Activated CD4-positive, alpha-beta T cell treated with anti-CD3 and anti-CD28 coated beads for 36 hours (primary cell): ENCODE measurements at regions of chr9 and their contacts with region 1.

Region 1: DNA sequence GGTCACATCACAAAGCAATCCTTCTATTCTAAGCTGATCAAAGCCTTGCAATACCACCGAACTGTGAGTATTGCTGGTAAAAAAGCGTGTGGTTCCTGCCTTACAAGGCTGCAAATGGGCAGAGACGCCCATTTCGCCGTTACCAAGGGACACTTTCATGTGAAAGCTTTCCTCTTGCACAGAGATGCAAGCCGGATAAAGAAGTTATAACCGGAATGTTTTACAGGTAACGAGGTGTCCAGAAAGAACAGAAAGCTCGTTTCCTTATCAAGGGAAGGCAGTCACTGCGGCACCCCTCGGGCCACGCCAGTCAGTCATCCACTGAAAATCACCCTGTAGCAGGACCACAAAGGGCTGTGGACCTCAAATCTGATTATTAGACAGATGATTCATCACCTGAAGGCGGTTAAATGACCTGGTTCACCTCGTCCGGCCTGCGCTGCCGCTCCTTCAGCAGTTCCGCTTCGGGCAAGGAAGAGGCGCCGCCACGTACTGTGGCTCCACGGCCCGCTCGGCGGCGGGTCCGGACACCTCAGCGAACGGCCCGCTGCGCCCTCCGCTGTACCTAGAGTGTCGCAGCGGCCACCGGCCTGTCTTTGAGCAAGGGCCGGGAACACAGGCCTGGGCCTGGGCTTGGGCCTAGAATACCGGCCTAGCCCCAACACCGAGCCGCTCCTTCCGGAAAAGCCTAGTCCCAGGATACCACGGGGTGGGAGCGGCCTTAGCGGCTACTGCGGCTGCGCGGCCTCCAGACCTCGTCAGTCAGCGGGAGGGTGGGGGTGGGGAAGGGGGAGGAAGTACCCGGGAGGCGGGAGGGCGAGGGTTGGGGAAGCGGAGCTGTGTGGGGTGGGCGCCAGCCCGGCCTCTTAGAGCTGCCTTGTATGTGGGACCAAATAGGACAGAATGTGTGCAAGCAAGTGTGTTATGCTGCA is at the start of gene KLHL9:
- DNase-seq: peak; percentile 94
- ATAC-seq: peak; percentile 94
- H3K4me3 Mint-ChIP-seq: peak within 1 kb of the TSS; percentile 86
- H3K27ac Mint-ChIP-seq: peak within 1 kb of the TSS; percentile 89
- H3K4me1 Mint-ChIP-seq: peaks cover 49% of the 10 kb centered on the region
- H3K27me3 Mint-ChIP-seq: peaks cover 4% of the 10 kb centered on the region
- total RNA-seq, gene KLHL9: 11.7 to 14.7 TPM

Region 2: GRCh38 chr9:21381448-21382339 is 46.7 kb after region 1 on chr9:
- CTCF ChIA-PET with region 1: interaction called, 5 read pairs
- POLR2A ChIA-PET with region 1: no interaction called
- intact Hi-C with region 1: loop called in 1 of 2 experiments (anchors 1 kb)
- DNase-seq: peak; percentile 18
- ATAC-seq: peak; percentile 90
- H3K4me3 Mint-ChIP-seq: no peak overlapping the region
- H3K27ac Mint-ChIP-seq: no peak overlapping the region
- H3K4me1 Mint-ChIP-seq: peaks cover 13% of the 10 kb centered on the region
- H3K27me3 Mint-ChIP-seq: peaks cover 37% of the 10 kb centered on the region

Region 3: GRCh38 chr9:21434202-21435014 is 99.4 kb after region 1 on chr9:
- CTCF ChIA-PET with region 1: interaction called, 10 read pairs
- POLR2A ChIA-PET with region 1: no interaction called
- intact Hi-C with region 1: no loop called
- DNase-seq: peak; percentile 64
- ATAC-seq: no peak
- H3K4me3 Mint-ChIP-seq: no peak overlapping the region
- H3K27ac Mint-ChIP-seq: no peak overlapping the region
- H3K4me1 Mint-ChIP-seq: no peaks in the 10 kb centered on the region
- H3K27me3 Mint-ChIP-seq: peaks cover 19% of the 10 kb centered on the region

Region 4: GRCh38 chr9:21559424-21560280 is 224.7 kb after region 1 on chr9:
- CTCF ChIA-PET with region 1: no interaction called
- POLR2A ChIA-PET with region 1: no interaction called
- intact Hi-C with region 1: loop called in 1 of 2 experiments (anchors 5 kb)
- DNase-seq: peak; percentile 69
- ATAC-seq: peak; percentile 88
- H3K4me3 Mint-ChIP-seq: peak overlapping the region; percentile 86
- H3K27ac Mint-ChIP-seq: no peak overlapping the region
- H3K4me1 Mint-ChIP-seq: peaks cover 33% of the 10 kb centered on the region
- H3K27me3 Mint-ChIP-seq: peaks cover 30% of the 10 kb centered on the region

Region 5: GRCh38 chr9:21802195-21803000 is 467.4 kb after region 1 on chr9 and contains the start of gene MTAP:
- CTCF ChIA-PET with region 1: no interaction called
- POLR2A ChIA-PET with region 1: no interaction called
- intact Hi-C with region 1: loop called (anchors 2 to 5 kb)
- DNase-seq: peak; percentile 85
- ATAC-seq: peak; percentile 89
- H3K4me3 Mint-ChIP-seq: peak within 1 kb of the TSS; percentile 99
- H3K27ac Mint-ChIP-seq: peak within 1 kb of the TSS; percentile 99
- H3K4me1 Mint-ChIP-seq: peaks cover 38% of the 10 kb centered on the region
- H3K27me3 Mint-ChIP-seq: peaks cover 8% of the 10 kb centered on the region
- total RNA-seq, gene MTAP: 59.6 to 77.0 TPM